Activated B cell treated with CpG ODN at 0.5 μM for 24 hours (primary cell): ENCODE measurements at regions of chr6 and their contacts with region 1.

Region 1: GRCh38 chr6:119742188-119742803 is 392.7 kb upstream of the MAN1A1 start:
- DNase-seq: peak; percentile 44
- ATAC-seq: peak; percentile 76
- H3K4me3 Mint-ChIP-seq: no peak overlapping the region
- H3K27ac Mint-ChIP-seq: no peak overlapping the region
- H3K4me1 Mint-ChIP-seq: no peaks in the 10 kb centered on the region
- H3K27me3 Mint-ChIP-seq: no peaks in the 10 kb centered on the region
- CTCF ChIP-seq: peak; percentile 61

Region 2: GRCh38 chr6:119720160-119720559 is 22.1 kb before region 1 on chr6:
- CTCF ChIA-PET with region 1: no interaction called
- POLR2A ChIA-PET with region 1: no interaction called
- intact Hi-C with region 1: no loop called
- DNase-seq: no peak
- ATAC-seq: no peak
- H3K4me3 Mint-ChIP-seq: no peak overlapping the region
- H3K27ac Mint-ChIP-seq: no peak overlapping the region
- H3K4me1 Mint-ChIP-seq: peaks cover 18% of the 10 kb centered on the region
- H3K27me3 Mint-ChIP-seq: no peaks in the 10 kb centered on the region
- CTCF ChIP-seq: no peak

Region 3: DNA sequence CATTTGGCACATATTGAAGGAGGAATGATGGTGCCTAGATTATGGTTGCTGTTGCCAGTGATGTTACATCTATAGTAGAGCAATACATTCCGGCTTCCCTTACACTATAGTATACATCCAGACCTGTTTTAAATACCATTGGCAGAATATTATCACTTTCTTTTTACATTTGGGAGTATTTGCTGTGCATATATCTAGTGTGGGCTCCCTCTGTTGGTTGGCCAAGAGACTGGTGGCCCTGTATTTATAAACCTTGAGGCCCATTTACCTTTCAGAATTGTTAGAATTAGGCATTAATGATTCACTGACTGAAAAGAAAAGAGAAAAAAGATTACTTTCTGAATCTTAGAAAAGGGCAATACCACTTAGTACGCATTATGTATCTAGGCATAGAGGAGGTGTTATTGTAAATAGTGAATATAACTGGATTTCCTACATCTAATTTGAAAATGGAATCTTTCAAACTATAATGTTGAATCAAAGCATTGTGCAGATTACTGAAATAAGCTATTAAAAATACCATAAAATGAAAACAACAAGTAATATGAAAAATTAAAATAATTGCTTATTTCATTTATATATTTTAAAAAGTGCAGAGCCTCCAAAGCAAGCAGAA is 236.1 kb after region 1 on chr6:
- CTCF ChIA-PET with region 1: interaction called, 3 read pairs
- POLR2A ChIA-PET with region 1: no interaction called
- intact Hi-C with region 1: loop called (anchors 1 kb)
- DNase-seq: no peak
- ATAC-seq: peak; percentile 52
- H3K4me3 Mint-ChIP-seq: no peak overlapping the region
- H3K27ac Mint-ChIP-seq: no peak overlapping the region
- H3K4me1 Mint-ChIP-seq: no peaks in the 10 kb centered on the region
- H3K27me3 Mint-ChIP-seq: no peaks in the 10 kb centered on the region
- CTCF ChIP-seq: peak; percentile 21

Region 4: DNA sequence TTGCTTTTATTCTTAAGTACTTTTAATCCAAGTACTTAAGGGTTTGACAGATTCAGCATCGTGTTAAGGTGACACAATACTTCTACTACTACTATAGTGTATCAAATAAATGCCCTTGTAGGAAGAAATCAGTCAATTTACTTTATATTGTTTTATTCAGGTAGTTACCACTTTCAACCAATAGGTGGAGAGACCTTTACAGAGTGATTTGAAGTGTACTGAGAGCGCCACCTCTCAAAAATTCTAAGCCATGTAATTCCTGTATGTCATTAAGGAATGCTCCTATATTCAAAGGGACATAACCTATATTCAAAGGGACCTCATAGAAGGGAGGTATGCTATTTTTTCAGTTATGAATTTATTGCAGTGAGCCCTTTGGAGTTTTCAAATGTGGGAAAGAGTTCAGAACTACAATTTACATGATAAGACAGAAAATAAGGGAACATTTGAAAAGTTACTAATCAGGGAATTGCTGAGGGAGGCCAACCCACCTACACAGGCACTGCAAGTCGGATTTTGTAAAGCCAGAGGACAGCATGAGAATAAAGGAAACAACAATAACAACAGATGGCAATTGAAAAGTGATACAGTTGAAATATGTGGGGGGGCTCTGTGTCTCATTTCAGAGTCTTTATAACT is 636.4 kb after region 1 on chr6:
- CTCF ChIA-PET with region 1: no interaction called
- POLR2A ChIA-PET with region 1: no interaction called
- intact Hi-C with region 1: loop called (anchors 5 kb)
- DNase-seq: no peak
- ATAC-seq: peak; percentile 58
- H3K4me3 Mint-ChIP-seq: no peak overlapping the region
- H3K27ac Mint-ChIP-seq: no peak overlapping the region
- H3K4me1 Mint-ChIP-seq: no peaks in the 10 kb centered on the region
- H3K27me3 Mint-ChIP-seq: no peaks in the 10 kb centered on the region
- CTCF ChIP-seq: no peak

Region 5: DNA sequence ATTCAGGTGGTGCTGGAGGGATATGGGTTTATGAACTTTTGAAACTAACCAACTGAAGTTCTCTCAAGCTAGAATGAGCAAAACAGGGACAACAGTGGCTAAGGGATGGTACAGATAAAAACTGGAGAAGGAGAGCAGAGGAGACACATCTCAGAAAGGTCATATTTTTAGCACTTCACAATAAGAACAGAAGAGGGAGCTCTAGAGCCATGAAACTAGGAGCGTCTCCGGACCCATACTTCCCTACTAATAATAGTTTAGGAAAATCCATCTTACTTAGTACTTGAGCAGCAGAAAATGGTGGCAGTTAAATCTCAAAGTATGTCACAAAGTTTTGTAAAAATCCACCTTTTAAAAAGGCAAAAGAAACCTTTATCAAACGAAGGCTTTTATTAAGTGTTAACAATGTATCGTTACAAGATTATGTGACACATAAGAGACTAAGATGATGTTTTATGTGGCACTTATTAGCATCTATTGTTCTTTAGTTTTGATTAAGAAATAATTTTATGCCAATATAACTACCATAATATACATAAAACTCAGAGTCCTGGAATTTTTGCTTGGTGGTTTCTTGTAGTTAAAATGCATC is 1313.4 kb after region 1 on chr6:
- CTCF ChIA-PET with region 1: no interaction called
- POLR2A ChIA-PET with region 1: no interaction called
- intact Hi-C with region 1: loop called (anchors 1 kb)
- DNase-seq: no peak
- ATAC-seq: peak; percentile 58
- H3K4me3 Mint-ChIP-seq: no peak overlapping the region
- H3K27ac Mint-ChIP-seq: no peak overlapping the region
- H3K4me1 Mint-ChIP-seq: peaks cover 2% of the 10 kb centered on the region
- H3K27me3 Mint-ChIP-seq: no peaks in the 10 kb centered on the region
- CTCF ChIP-seq: no peak